MCF 10A (cell line): ENCODE measurements at regions of chr11 and their contacts with region 1.

Region 1: GRCh38 chr11:65540297-65541092 is 15.6 kb downstream of the SCYL1 start:
- DNase-seq: peak; percentile 87
- H3K4me3 Mint-ChIP-seq: peak overlapping the region; percentile 79
- H3K27ac Mint-ChIP-seq: peak overlapping the region; percentile 23
- H3K4me1 Mint-ChIP-seq: peaks cover 6% of the 10 kb centered on the region
- H3K27me3 Mint-ChIP-seq: no peaks in the 10 kb centered on the region
- CTCF ChIP-seq: peak; percentile 92

Region 2: DNA sequence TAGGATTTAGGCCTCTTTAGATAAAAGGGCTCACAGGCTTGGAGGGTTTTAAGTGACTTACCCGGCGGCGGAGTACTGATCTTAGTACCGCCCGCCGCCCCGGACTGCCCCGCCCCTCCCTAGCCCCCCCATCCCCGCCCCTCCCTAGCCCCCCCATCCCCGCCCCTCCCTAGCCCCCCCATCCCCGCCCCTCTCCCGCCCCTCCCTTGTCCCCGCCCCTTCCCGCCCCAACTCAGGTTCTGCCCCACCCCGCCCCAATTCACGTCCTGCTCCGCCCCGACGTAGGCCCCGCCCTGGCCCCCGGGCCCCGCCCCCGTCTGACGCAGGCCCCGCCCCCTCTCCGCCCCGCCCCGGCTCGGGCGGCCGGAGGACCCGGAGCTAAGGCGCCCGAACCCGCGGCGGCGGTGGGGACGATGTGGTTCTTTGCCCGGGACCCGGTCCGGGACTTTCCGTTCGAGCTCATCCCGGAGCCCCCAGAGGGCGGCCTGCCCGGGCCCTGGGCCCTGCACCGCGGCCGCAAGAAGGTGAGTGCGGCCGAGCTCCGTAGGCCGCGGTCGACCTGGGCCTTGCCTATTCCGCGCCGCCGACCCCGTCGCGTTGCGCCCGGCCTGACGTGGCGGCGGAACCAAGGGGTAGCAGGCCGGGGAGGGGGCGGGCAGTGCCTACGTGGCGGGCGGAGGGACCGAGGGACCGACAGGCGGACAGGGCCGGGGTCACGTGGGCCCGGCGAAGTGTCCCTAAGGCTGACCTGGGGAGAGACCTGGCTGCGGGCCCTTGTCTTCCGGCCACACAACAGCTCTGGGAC is 15.6 kb before region 1 on chr11 and contains the start of gene SCYL1:
- CTCF ChIA-PET with region 1: interaction called, 26 read pairs
- POLR2A ChIA-PET with region 1: interaction called, 10 read pairs
- intact Hi-C with region 1: no loop called
- DNase-seq: peak; percentile 71
- H3K4me3 Mint-ChIP-seq: peak within 1 kb of the TSS; percentile 88
- H3K27ac Mint-ChIP-seq: peak within 1 kb of the TSS; percentile 90
- H3K4me1 Mint-ChIP-seq: peaks cover 10% of the 10 kb centered on the region
- H3K27me3 Mint-ChIP-seq: no peaks in the 10 kb centered on the region
- CTCF ChIP-seq: no peak
- total RNA-seq, gene SCYL1: 70.9 and 75.5 TPM in 2 replicates

Region 3: GRCh38 chr11:65551572-65552398 is 11.3 kb after region 1 on chr11:
- CTCF ChIA-PET with region 1: interaction called, 18 read pairs
- POLR2A ChIA-PET with region 1: interaction called, 4 read pairs
- intact Hi-C with region 1: loop called (anchors 2 kb)
- DNase-seq: peak; percentile 48
- H3K4me3 Mint-ChIP-seq: no peak overlapping the region
- H3K27ac Mint-ChIP-seq: no peak overlapping the region
- H3K4me1 Mint-ChIP-seq: peaks cover 23% of the 10 kb centered on the region
- H3K27me3 Mint-ChIP-seq: no peaks in the 10 kb centered on the region
- CTCF ChIP-seq: peak; percentile 62

Region 4: GRCh38 chr11:65569973-65570918 is 29.8 kb after region 1 on chr11 and contains the start of gene ZNRD2:
- CTCF ChIA-PET with region 1: interaction called, 51 read pairs
- POLR2A ChIA-PET with region 1: interaction called, 75 read pairs
- intact Hi-C with region 1: loop called (anchors 1 kb)
- DNase-seq: peak; percentile 97
- H3K4me3 Mint-ChIP-seq: peak within 1 kb of the TSS; percentile 97
- H3K27ac Mint-ChIP-seq: peak within 1 kb of the TSS; percentile 96
- H3K4me1 Mint-ChIP-seq: peaks cover 31% of the 10 kb centered on the region
- H3K27me3 Mint-ChIP-seq: no peaks in the 10 kb centered on the region
- CTCF ChIP-seq: peak; percentile 41
- total RNA-seq, gene ZNRD2: 65.4 and 68.5 TPM in 2 replicates

Region 5: GRCh38 chr11:65588199-65589054 is 47.9 kb after region 1 on chr11:
- CTCF ChIA-PET with region 1: interaction called, 25 read pairs
- POLR2A ChIA-PET with region 1: interaction called, 3 read pairs
- intact Hi-C with region 1: loop called (anchors 1 kb)
- DNase-seq: peak; percentile 71
- H3K4me3 Mint-ChIP-seq: no peak overlapping the region
- H3K27ac Mint-ChIP-seq: peak overlapping the region; percentile 74
- H3K4me1 Mint-ChIP-seq: peaks cover 15% of the 10 kb centered on the region
- H3K27me3 Mint-ChIP-seq: no peaks in the 10 kb centered on the region
- CTCF ChIP-seq: peak; percentile 64

Region 6: GRCh38 chr11:65615229-65615941 is 74.9 kb after region 1 on chr11 and contains the start of gene PCNX3:
- CTCF ChIA-PET with region 1: interaction called, 6 read pairs
- POLR2A ChIA-PET with region 1: interaction called, 14 read pairs
- intact Hi-C with region 1: no loop called
- DNase-seq: peak; percentile 100
- H3K4me3 Mint-ChIP-seq: peak within 1 kb of the TSS; percentile 91
- H3K27ac Mint-ChIP-seq: peak within 1 kb of the TSS; percentile 96
- H3K4me1 Mint-ChIP-seq: peaks cover 26% of the 10 kb centered on the region
- H3K27me3 Mint-ChIP-seq: no peaks in the 10 kb centered on the region
- CTCF ChIP-seq: no peak
- total RNA-seq, gene PCNX3: 40.9 and 45.8 TPM in 2 replicates

Region 7: GRCh38 chr11:65911682-65912568 is 371.4 kb after region 1 on chr11:
- CTCF ChIA-PET with region 1: no interaction called
- POLR2A ChIA-PET with region 1: no interaction called
- intact Hi-C with region 1: no loop called
- DNase-seq: peak; percentile 90
- H3K4me3 Mint-ChIP-seq: no peak overlapping the region
- H3K27ac Mint-ChIP-seq: no peak overlapping the region
- H3K4me1 Mint-ChIP-seq: peaks cover 33% of the 10 kb centered on the region
- H3K27me3 Mint-ChIP-seq: no peaks in the 10 kb centered on the region
- CTCF ChIP-seq: peak; percentile 27